Activated naive CD8-positive, alpha-beta T cell treated with anti-CD3 and anti-CD28 coated beads, Interleukin-2, amount 10 ng/mL, durations not matched to agents 7 days and 5 days (primary cell): ENCODE measurements at regions of chr1 and their contacts with region 1.

Region 1: DNA sequence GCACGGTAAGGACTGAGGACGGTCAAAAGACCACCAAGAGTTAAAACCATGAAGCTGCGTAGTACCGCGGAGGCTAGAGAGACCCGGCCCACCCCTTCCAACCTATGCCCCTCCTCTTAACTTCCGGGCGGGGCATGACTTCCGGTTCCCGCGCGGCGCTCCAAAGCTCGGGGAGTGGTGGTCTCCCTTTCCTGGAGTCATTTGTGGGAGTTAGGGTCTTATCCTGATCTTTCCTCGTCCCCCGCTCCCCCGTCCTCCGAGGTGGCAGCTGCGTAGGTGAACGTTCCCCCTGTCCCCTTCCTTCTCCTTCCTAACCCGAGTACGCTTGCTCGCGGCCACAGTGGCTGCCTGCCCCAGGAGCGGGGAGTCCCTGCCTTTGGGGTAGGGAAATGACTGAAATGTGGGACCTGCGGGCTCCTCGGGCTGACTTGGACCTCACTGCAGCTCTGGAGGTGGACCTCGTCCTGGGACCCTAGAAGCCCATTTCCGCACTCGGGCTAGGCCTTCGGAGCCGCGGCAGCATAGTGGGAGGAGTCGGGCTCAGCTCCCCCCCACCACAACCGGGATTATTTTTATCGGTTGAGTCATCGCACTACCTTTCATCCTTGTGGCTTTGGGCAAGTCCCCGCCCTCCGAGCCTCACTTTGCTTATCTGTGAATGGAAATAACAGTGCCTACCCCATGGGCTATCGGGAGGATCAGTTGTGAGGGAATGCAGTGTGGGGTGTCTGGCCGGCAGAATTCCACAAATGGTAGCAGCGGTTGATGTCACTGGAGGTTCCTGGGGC is 24.1 kb downstream of the CELA3A start:
- DNase-seq: peak; percentile 84
- ATAC-seq: peak; percentile 59
- H3K4me3 Mint-ChIP-seq: peak overlapping the region; percentile 89
- H3K27ac Mint-ChIP-seq: peak overlapping the region; percentile 99
- H3K4me1 Mint-ChIP-seq: peaks cover 37% of the 10 kb centered on the region
- H3K27me3 Mint-ChIP-seq: no peaks in the 10 kb centered on the region

Region 2: DNA sequence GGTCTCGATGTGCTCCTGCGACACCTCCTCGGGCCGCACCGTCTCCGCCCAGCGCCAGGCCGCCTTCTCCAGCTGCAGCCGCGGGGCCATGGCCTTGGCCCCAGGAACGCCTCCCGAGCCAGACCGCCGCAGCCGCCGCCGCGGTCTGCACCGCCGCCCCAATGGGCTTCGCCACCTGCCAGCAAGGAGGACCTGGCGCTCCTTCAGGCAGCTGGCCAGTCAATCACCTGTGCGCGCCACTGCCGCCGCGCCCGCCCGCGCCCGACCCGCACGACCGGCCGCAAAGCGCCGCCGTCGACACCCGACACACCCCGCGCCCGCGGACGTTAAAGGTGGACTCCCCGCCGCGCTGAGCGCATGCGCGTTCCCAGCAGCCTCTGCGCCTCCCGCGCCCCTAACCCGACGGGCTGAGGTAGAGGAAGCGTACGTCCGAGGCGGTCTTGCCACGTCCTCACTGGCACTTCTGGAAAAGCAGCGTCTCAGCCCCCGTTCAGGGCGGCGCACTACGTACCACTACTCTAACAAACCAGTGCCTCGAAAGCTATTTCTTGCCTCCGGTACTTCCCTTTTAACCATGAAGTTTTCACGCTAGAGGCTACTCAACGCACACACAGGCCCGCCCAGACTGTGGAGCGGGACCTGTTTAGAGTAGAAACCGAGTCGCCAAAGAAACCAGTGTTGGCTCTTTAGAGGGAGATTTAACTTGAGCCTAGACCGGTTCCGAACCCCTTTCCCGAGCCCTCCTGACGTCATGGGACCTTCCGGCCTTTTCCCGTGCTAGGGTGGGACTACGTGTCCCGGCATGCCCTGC is 242.5 kb before region 1 on chr1 and contains the start of gene USP48:
- POLR2A ChIA-PET with region 1: interaction called, 19 read pairs
- DNase-seq: peak; percentile 98
- ATAC-seq: peak; percentile 91
- H3K4me3 Mint-ChIP-seq: peak within 1 kb of the TSS; percentile 90
- H3K27ac Mint-ChIP-seq: peak within 1 kb of the TSS; percentile 100
- H3K4me1 Mint-ChIP-seq: peaks cover 19% of the 10 kb centered on the region
- H3K27me3 Mint-ChIP-seq: peaks cover 7% of the 10 kb centered on the region
- total RNA-seq, gene USP48: 79.6 to 85.2 TPM

Region 3: DNA sequence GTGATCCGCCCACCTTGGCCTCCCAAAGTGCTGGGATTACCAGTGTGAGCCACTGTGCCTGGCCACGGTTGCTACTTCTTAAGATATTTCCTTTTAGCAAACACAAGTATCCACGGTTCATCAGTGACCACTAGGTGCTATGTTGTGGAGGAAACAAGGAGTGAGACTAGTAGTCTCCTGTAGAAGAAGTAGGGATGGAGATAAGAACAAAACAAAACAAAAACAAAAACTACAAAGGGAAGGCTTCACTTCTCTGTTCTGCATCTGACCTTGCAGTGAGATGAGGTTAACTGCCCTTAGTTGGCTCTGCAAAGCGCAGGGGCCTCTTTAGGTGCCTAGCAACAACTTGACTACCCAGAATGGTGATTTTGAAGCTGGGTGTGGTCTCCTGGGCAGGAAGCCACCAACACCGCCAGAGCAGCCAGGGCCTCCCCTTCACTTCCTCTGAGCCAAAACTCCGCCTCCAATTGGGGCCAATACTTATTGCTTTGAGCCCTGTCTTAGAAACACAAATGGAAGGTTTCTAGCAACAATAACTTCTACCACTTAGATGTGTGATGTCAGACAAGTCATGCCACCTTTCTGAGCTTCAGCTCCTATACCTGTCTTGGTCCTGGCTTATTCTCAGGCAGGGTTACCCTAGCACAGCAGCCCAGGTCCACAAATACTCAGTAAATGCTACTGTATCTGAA is 14.2 kb after region 1 on chr1:
- POLR2A ChIA-PET with region 1: interaction called, 316 read pairs
- DNase-seq: peak; percentile 81
- ATAC-seq: peak; percentile 98
- H3K4me3 Mint-ChIP-seq: peak overlapping the region; percentile 89
- H3K27ac Mint-ChIP-seq: peak overlapping the region; percentile 96
- H3K4me1 Mint-ChIP-seq: peaks cover 37% of the 10 kb centered on the region
- H3K27me3 Mint-ChIP-seq: no peaks in the 10 kb centered on the region

Region 4: DNA sequence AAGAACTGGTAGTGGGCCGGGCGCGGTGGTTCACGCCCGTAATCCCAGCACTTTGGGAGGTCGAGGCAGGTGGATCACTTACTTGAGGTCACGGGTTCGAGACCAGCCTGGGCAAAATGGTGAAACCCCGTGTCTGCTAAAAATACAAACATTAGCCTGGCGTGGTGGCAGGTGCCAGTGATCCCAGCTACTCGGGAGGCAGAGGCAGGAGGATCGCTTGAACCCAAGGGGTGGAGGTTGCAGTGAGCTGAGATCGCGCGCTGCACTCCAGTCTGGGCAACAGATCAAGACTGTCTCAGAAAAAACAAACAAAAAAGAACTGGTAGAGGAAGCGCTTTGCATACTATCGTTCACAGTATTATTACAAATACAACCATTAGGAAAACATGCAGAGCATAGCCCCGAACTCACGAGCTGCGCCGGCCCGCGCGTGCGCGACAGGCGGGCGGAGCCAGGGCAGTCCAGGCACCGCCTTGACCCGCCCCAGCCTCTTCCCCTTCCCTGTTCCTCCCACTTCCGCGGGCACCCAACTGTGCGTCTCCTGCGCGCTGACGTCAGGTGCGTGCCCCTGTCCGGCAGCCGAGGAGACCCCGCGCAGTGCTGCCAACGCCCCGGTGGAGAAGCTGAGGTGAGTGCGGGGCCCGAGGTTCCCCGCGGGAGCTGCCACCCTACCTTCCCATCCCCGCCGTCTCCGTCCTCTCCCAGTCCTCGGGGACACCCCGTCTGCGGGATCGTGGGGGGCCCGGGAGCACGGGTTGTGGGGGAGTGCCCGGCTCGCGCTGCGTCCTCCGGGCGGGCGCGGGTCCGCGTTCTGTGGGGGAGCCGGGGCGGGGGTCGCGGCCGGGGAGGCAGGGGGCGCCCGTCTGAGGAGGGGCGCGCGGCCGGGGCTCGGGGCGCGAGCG is 26.8 kb after region 1 on chr1 and contains the start of gene CDC42:
- POLR2A ChIA-PET with region 1: interaction called, 229 read pairs
- DNase-seq: peak; percentile 98
- ATAC-seq: peak; percentile 94
- H3K4me3 Mint-ChIP-seq: peak within 1 kb of the TSS; percentile 99
- H3K27ac Mint-ChIP-seq: peak within 1 kb of the TSS; percentile 97
- H3K4me1 Mint-ChIP-seq: peaks cover 43% of the 10 kb centered on the region
- H3K27me3 Mint-ChIP-seq: no peaks in the 10 kb centered on the region
- total RNA-seq, gene CDC42: 283 to 303 TPM

Region 5: DNA sequence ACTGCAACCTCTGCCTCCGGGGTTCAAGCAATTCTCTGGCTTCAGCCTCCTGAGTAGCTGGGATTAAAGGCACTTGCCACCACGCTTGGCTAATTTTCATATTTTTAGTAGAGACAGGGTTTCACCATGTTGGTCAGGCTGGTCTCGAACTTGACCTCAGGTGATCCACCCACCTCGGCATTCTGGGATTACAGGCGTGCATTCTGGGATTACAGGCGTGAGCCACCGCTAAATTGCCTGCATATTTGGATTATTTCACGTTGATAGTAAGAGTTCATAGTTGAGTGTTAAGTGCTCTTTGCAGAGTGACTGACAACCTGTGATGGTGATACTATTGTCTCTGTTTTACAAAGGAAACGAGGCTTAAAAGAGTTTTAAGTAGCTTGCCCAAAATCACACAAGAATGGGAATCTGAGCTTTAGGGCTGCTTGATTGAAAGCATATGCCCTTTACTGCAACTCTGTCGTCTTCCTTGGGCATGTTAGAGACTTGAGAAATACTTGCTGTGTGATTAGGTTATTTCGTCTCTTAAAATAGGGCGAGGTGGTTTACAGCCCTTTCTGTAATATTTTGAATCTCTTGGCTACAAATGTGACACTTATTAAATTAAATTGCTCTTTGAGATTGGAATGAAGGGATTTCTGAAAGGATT is 39.3 kb after region 1 on chr1:
- POLR2A ChIA-PET with region 1: interaction called, 13 read pairs
- DNase-seq: no peak
- ATAC-seq: no peak
- H3K4me3 Mint-ChIP-seq: no peak overlapping the region
- H3K27ac Mint-ChIP-seq: no peak overlapping the region
- H3K4me1 Mint-ChIP-seq: peaks cover 42% of the 10 kb centered on the region
- H3K27me3 Mint-ChIP-seq: no peaks in the 10 kb centered on the region

Region 6: DNA sequence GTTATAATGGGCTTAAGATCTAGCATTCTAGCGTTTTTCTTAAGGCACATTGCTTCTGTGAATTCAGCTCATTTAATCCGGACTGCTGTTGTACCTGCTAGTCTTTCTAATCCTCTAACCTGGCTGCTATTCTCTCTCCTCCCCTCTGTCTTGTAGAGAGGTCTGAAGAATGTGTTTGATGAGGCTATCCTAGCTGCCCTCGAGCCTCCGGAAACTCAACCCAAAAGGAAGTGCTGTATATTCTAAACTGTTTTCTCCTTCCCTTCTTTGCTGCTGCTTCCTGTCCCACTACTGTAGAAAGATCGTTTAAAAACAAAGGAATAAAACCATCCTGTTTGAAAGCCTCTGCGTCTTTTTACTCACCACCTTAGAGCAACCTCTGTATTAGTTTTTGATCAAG is 64.2 kb after region 1 on chr1:
- POLR2A ChIA-PET with region 1: interaction called, 17 read pairs
- DNase-seq: no peak
- ATAC-seq: peak; percentile 71
- H3K4me3 Mint-ChIP-seq: peak overlapping the region; percentile 61
- H3K27ac Mint-ChIP-seq: peak overlapping the region; percentile 85
- H3K4me1 Mint-ChIP-seq: peaks cover 58% of the 10 kb centered on the region
- H3K27me3 Mint-ChIP-seq: no peaks in the 10 kb centered on the region